Naive thymus-derived CD4-positive, alpha-beta T cell (primary cell): ENCODE measurements at regions of chr11 and their contacts with region 1.

Region 1: GRCh38 chr11:48034926-48035871 is 54.8 kb downstream of the PTPRJ start:
- DNase-seq: no peak
- ATAC-seq: no peak
- H3K4me3 ChIP-seq: no peak overlapping the region
- H3K4me3 Mint-ChIP-seq: peak overlapping the region; percentile 8 to 76 (median 62)
- H3K27ac ChIP-seq: no peak overlapping the region
- H3K27ac Mint-ChIP-seq: peak overlapping the region; percentile 56 to 88 (median 71)
- H3K4me1 ChIP-seq: peaks cover 18 to 53% of the 10 kb centered on the region in 2 donors
- H3K4me1 Mint-ChIP-seq: peaks cover 60 to 87% (median 81%) of the 10 kb centered on the region in 7 donors
- H3K27me3 ChIP-seq: no peaks in the 10 kb centered on the region
- H3K27me3 Mint-ChIP-seq: no peaks in the 10 kb centered on the region

Region 2: DNA sequence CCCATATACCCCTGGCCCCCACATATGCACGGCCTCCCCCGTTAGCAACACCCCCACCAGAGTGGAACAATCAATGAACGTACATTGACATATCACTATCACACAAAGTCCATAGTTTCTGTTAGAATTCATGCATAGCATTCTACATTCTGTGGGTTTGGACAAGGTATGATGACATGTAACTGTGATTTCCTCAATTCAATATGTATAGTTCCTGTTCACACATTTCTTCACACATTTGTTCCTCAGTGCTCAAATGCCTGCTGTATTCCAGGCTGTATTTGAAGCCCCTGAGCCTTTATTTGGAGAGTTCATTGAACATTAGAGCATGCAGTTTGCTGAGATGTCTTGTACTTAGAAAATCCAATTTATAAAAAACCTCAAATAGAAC is 15.1 kb after region 1 on chr11:
- CTCF ChIA-PET with region 1: no interaction called
- POLR2A ChIA-PET with region 1: interaction called, 12 read pairs
- intact Hi-C with region 1: loop called in 1 of 2 experiments (anchors 2 kb)
- DNase-seq: no peak
- ATAC-seq: peak; percentile 62
- H3K4me3 ChIP-seq: no peak overlapping the region
- H3K4me3 Mint-ChIP-seq: peak overlapping the region in 3 of 10 donors; percentile 0 to 34 (median 9)
- H3K27ac ChIP-seq: no peak overlapping the region
- H3K27ac Mint-ChIP-seq: peak overlapping the region in 7 of 9 donors; percentile 4 to 80 (median 54)
- H3K4me1 ChIP-seq: peaks cover 40 to 43% of the 10 kb centered on the region in 2 donors
- H3K4me1 Mint-ChIP-seq: peaks cover 39 to 76% (median 72%) of the 10 kb centered on the region in 7 donors
- H3K27me3 ChIP-seq: no peaks in the 10 kb centered on the region
- H3K27me3 Mint-ChIP-seq: no peaks in the 10 kb centered on the region